Esophagus muscularis mucosa (tissue), 4 donors: ENCODE measurements at regions of chr9 and their contacts with region 1.

Region 1: DNA sequence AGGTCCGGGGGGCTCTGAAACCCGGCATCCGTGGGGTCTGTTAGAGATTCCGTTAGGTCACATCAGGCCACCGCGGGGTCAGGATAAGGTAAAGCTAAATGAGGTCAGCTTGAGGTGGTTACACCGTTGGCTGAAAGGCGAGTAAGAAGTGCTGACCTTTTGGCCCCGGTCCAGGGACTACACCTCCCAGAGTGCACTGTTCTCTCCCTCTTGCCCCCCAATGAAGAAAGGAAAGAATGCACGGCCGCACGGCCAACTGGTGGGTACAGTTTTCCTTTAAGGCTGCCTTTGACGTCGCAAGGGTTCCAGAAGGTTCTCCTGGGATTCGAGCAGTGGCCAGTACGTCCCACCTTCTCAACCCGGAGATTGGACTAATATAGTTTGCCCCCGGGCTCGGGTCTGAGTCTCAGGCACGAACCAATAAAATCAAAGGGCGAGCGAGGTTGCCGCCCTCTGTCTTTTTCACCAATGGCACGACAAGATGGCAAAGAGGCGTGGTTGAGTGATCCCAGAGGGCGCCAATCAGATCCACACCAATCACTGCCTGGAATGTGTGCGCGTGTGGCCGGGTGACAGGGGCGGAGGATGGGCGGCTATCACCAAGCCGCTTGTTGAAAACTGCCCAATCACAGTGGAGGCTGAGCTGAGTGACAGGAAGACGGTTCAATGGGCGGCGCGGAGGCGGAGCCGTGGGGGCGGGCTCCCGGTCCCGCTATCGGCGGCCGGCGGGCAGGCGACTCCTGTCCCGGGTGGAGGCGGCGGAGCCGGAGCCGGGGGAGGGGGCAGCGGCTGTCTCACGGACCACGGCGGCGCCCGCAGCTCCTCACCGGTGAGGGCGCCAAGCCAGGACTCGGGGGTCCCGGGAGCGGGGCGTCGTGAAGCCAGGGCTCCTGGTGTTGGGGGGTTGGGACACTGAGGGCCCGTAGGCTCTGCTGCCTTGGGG is at the start of gene DNAJB5:
- DNase-seq: peak; percentile 100
- H3K4me3 ChIP-seq: peak within 1 kb of the TSS; percentile 89 to 93 (median 92)
- H3K27ac ChIP-seq: peak within 1 kb of the TSS in 2 of 4 donors; percentile 98 to 99
- H3K4me1 ChIP-seq: peaks cover 44 to 53% (median 52%) of the 10 kb centered on the region in 4 donors
- H3K27me3 ChIP-seq: no peaks in the 10 kb centered on the region
- CTCF ChIP-seq: peak in 1 of 3 experiments; percentile 13
- EP300 ChIP-seq: peak; percentile 27
- POLR2A ChIP-seq: peak; percentile 97
- total RNA-seq, gene DNAJB5: 83.5 to 124 (median 93.8) TPM

Region 2: GRCh38 chr9:35071814-35072460 is 82.7 kb after region 1 on chr9:
- intact Hi-C with region 1: loop called (anchors 5 kb)
- DNase-seq: peak; percentile 95
- H3K4me3 ChIP-seq: peak overlapping the region; percentile 85 to 100 (median 92)
- H3K27ac ChIP-seq: peak overlapping the region; percentile 98 to 100 (median 100)
- H3K4me1 ChIP-seq: peaks cover 37 to 52% (median 47%) of the 10 kb centered on the region in 4 donors
- H3K27me3 ChIP-seq: no peaks in the 10 kb centered on the region
- CTCF ChIP-seq: peak; percentile 20 to 37 (median 34)
- EP300 ChIP-seq: no peak
- POLR2A ChIP-seq: peak; percentile 76